PC-3 (cell line): ENCODE measurements at regions of chr10 and their contacts with region 1.

Region 1: DNA sequence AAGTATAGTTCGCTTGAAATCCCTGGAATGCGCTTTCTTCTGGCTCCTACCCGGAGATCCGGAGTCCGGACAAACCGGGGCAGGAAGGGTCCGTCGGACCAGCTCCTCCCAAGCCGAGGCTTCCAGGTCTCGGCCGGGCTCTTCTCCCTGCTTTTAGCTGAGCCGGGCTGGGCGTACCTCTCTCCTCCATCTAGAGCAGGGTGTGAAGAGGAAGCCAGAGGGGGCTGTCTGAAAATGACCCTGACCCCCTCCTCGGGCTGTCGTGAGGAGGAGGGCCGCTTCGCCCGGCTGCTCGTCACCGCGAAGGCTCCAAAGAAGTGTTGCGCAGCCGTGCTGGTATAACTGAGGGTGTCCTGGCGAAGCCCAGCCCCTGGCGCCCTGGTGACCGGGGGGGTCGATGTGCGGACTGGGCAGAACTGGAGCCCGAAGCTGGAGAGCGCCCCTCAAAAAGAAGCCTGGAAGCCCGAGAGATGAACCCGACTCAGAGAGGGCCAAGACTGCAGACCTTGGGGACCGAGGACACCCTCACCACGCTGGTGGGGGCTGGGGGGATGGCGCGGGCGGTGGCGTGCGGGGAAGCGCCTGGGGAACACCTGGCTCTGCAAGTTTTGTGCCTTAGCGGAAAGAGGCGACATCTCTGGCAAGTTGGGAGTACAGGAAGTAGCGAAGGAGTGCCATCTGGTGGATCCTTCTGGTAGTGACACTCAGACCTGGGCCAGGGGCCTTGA is 5.7 kb downstream of the KAZALD1 start:
- DNase-seq: peak; percentile 87
- ATAC-seq: peak; percentile 34
- H3K4me3 ChIP-seq: peak overlapping the region; percentile 72
- H3K27ac ChIP-seq: peak overlapping the region; percentile 41
- H3K4me1 ChIP-seq: peaks cover 26% of the 10 kb centered on the region
- H3K27me3 ChIP-seq: no peaks in the 10 kb centered on the region
- CTCF ChIP-seq: peak; percentile 67

Region 2: GRCh38 chr10:101031128-101031795 is 36.3 kb before region 1 on chr10 and contains the starts of genes PDZD7 and SFXN3:
- CTCF ChIA-PET with region 1: no interaction called
- POLR2A ChIA-PET with region 1: no interaction called
- intact Hi-C with region 1: no loop called
- DNase-seq: peak; percentile 91
- ATAC-seq: peak; percentile 80
- H3K4me3 ChIP-seq: peak within 1 kb of the TSS; percentile 83
- H3K27ac ChIP-seq: peak within 1 kb of the TSS; percentile 95
- H3K4me1 ChIP-seq: peaks cover 8% of the 10 kb centered on the region
- H3K27me3 ChIP-seq: no peaks in the 10 kb centered on the region
- CTCF ChIP-seq: no peak
- total RNA-seq, gene PDZD7: 2.5 and 2.8 TPM in 2 replicates
- total RNA-seq, gene SFXN3: 46.7 and 63.7 TPM in 2 replicates

Region 3: GRCh38 chr10:101052285-101052684 is 15.2 kb before region 1 on chr10:
- CTCF ChIA-PET with region 1: interaction called, 6 read pairs
- POLR2A ChIA-PET with region 1: no interaction called
- intact Hi-C with region 1: loop called (anchors 2 kb)
- DNase-seq: peak; percentile 78
- ATAC-seq: peak; percentile 94
- H3K4me3 ChIP-seq: peak overlapping the region; percentile 29; the same call in 1 of the 2 replicates
- H3K27ac ChIP-seq: peak overlapping the region; percentile 66
- H3K4me1 ChIP-seq: peaks cover 17% of the 10 kb centered on the region
- H3K27me3 ChIP-seq: no peaks in the 10 kb centered on the region
- CTCF ChIP-seq: no peak